AG04449 (cell line): ENCODE measurements at regions of chr18 and their contacts with region 1.

Region 1: GRCh38 chr18:26307189-26307773 is 81.0 kb downstream of the TAF4B start:
- DNase-seq: no peak
- H3K4me3 ChIP-seq: no peak overlapping the region
- CTCF ChIP-seq: peak; percentile 71

Region 2: GRCh38 chr18:26121476-26121875 is 185.8 kb before region 1 on chr18:
- CTCF ChIA-PET with region 1: no interaction called
- POLR2A ChIA-PET with region 1: no interaction called
- DNase-seq: no peak
- H3K4me3 ChIP-seq: no peak overlapping the region
- CTCF ChIP-seq: no peak

Region 3: DNA sequence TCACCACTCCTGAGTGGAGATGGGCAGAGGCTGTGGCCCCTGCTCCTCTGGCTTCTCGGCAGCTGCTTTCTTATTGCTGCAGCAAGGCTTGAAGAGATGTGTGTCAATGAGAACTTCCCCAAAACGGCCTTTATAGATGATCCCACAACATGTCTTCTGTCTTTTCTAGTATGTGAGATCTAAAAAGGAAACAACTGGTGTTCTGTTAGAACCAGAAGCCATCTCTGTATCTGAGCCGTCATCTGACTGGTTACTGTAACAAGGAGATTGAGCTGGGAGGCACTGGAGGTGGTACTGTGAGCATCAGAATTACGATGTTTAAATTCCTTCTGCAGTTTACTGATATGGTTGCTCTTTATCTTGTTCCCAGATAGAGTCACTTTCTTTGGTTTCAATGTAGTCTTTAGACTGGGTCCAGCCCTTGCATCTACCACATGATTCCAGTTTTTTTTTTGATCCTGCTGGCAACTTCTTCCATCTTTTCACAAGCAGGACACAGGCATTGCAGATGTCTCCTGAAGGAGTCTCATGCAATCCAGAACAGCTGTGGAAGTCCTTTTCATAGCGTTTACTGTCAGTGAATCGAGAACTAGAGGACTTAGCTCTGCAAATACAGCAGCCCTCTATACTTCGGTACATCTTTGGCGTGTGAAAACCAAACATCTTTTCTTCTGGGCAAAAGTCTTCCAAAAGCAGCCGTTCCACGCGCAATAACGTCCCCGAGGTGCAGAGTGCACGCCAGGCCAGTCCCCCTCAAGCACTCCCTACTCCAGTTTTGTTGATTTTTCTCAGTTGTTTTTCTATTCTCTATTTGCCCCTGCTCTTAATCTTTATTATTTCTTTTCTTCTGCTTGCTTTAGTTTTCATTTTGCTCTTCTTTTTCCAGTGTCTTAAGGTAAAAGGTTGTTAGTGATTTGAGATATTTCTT is 51.3 kb before region 1 on chr18:
- CTCF ChIA-PET with region 1: no interaction called
- POLR2A ChIA-PET with region 1: no interaction called
- DNase-seq: no peak
- H3K4me3 ChIP-seq: no peak overlapping the region
- CTCF ChIP-seq: no peak

Region 4: DNA sequence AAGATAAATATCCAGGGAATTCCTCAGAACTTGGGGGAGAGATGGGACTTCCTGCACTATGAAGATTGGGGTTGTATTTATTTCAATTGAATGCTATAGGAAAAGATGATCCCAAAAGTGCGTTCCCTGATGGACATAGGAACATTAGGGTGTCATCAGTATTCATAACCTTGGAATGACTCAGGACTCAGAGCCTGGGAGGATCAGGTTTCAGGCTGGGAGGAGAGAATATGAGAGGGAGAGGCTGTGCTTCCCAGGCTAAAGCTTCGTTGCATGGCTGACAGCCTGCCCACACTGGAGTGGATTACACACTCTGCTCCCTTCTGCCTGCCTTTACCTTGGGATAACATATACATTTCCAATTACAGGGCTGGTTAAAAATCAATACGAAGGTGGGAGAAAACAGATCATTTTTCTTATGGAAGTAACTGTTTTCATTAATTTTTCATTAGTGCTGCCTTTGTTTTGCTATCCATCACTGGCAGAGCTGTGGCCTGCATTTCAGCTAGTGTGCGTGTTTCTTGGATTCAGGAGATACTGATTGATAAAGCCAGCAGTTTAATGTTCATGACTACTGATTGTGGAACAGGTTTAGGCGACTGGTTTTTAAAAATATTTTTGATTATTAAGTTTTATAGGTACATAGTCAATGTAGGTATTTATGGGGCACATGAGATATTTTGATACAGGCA is 122.4 kb after region 1 on chr18:
- CTCF ChIA-PET with region 1: no interaction called
- POLR2A ChIA-PET with region 1: no interaction called
- DNase-seq: peak; percentile 49
- H3K4me3 ChIP-seq: no peak overlapping the region
- CTCF ChIP-seq: no peak

Region 5: DNA sequence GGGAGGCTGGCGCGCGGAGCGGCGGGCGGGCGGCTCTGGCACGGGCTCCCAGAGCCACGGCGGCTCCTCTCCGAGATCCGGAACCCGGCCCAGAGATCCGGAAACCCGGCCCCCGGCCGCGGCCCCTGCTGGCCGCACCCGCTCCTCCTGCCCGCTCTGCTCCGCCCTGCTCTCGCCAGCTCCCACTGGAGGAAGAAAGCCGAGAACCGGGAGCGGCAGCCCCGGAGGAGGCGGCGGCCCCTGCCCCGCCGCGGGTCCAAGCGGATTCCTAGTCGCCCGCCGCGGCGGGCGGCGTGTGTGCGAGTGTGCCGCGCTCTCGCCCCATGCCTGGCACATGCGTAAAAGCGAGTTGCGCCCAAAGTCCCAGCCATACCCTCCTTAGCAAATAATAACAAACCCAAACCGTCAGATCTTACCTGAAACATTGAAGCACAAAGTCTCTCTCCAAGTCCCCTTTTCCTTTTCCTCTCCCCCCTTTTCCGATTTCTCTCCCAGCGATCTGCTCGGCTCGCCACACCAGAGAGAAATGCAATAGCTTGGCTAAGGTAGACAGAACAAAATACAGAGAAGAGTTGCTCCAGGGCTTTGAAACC is 349.8 kb after region 1 on chr18:
- CTCF ChIA-PET with region 1: interaction called, 10 read pairs
- POLR2A ChIA-PET with region 1: no interaction called
- DNase-seq: no peak
- H3K4me3 ChIP-seq: peak overlapping the region; percentile 60
- CTCF ChIP-seq: peak; percentile 52